ENCODE measurements at regions of chr4 and their contacts with region 1.

Region 1: DNA sequence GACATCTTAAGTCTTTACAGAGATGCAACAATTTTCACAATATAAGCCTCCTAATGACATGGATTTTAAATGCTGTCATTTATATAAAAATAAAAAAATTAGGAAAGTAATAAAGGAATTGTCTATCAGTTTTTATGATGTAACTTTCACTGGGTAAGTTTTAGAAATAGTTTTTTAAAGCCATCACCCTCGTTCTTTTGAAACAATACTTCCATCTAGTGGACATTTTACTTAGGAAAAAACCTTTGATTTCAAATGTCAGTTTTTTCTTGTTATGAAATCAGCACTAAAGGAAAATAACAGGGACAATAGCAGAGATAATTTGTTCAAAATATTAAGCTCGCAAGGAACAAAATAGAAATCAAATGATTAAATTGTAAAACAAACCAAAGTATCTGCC is 24.3 kb upstream of the NDNF start:
- DNase-seq: peak; percentile 7
- H3K4me3 ChIP-seq: no peak overlapping the region
- H3K27ac ChIP-seq: no peak overlapping the region
- H3K4me1 ChIP-seq: no peaks in the 10 kb centered on the region
- H3K27me3 ChIP-seq: peaks cover 2% of the 10 kb centered on the region
- CTCF ChIP-seq: peak; percentile 30 to 54

Region 2: DNA sequence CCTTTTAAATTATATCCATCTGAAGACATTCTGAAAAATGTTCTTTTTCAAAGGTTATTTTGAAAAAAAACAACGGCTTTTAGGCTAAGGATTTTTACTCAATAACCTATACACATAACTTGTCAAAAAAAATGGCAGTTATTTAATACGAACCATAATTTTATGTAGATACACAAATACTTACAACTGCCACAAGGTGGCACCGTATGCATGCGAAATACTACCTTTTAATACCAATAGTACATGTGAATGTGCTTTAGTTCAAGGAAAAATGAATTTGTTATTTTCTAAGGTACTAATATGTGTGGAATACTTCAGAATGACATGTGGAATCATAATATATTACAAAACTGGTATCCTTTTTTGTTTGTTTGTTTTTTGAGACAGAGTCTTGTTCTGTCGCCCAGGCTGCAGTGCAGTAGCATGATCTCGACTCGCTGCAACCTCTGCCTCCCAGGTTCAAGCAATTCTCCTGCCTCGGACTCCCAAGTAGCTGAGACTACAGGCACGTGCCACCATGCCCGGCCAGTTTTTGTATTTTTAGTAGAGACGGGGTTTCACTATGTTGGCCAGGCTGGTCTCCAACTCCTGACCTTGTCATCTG is 1025.3 kb before region 1 on chr4:
- CTCF ChIA-PET with region 1: no interaction called
- dilution Hi-C with region 1: no loop called
- in situ Hi-C with region 1: no loop called
- intact Hi-C with region 1: loop called (anchors 1 kb)
- DNase-seq: peak; percentile 38
- H3K4me3 ChIP-seq: no peak overlapping the region
- H3K27ac ChIP-seq: no peak overlapping the region
- H3K4me1 ChIP-seq: peaks cover 21% of the 10 kb centered on the region
- H3K27me3 ChIP-seq: no peaks in the 10 kb centered on the region
- CTCF ChIP-seq: peak; percentile 54 to 58

Region 3: GRCh38 chr4:120922381-120923206 is 174.0 kb before region 1 on chr4 and contains the start of gene PRDM5:
- CTCF ChIA-PET with region 1: no interaction called
- dilution Hi-C with region 1: no loop called
- in situ Hi-C with region 1: no loop called
- intact Hi-C with region 1: loop called (anchors 10 kb)
- DNase-seq: peak; percentile 35
- H3K4me3 ChIP-seq: peak within 1 kb of the TSS; percentile 78 to 92 (median 82)
- H3K27ac ChIP-seq: peak within 1 kb of the TSS; percentile 77
- H3K4me1 ChIP-seq: peaks cover 13% of the 10 kb centered on the region
- H3K27me3 ChIP-seq: no peaks in the 10 kb centered on the region
- CTCF ChIP-seq: peak in 1 of 2 donors; percentile 45
- total RNA-seq, gene PRDM5: 7.9 to 19.0 TPM

Region 4: GRCh38 chr4:121016630-121017029 is 80.0 kb before region 1 on chr4:
- CTCF ChIA-PET with region 1: no interaction called
- dilution Hi-C with region 1: no loop called
- in situ Hi-C with region 1: no loop called
- intact Hi-C with region 1: no loop called
- DNase-seq: no peak
- H3K4me3 ChIP-seq: no peak overlapping the region
- H3K27ac ChIP-seq: no peak overlapping the region
- H3K4me1 ChIP-seq: no peaks in the 10 kb centered on the region
- H3K27me3 ChIP-seq: peaks cover 2% of the 10 kb centered on the region
- CTCF ChIP-seq: no peak